Esophagus muscularis mucosa (tissue), 4 donors: ENCODE measurements at regions of chr6 and their contacts with region 1.

Region 1: DNA sequence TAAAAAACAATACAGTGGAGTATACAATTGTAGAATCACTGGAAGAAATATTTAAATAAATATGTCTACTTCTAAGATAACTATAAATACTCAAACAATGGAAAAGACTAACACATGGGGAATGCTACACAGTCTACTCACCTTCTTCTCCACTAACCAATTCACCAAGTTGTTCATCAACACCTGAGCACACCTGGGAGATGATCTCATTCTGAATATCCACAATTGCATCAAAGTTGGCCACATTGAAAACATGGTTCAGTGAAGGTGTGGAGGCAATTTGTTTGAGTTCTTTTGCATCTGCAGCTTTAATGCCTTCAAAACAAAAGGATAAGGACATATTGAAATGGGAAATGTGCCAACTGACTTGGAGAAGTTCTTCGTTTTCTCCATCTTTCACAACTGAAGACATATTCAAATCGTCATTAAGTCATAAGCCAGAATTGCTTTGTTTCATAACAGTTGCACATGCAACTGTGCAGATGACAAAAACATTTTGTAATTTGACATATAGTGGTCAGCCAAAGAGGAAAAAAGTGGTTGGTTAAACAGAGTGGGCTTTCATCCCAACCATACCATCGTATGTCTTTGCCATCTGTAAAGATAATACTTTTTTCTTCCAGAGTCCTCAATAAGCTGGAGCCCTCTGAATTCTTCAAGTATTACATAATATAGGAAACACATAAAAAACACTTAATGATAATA is 17.5 kb downstream of the COL12A1 start:
- DNase-seq: no peak
- H3K4me3 ChIP-seq: no peak overlapping the region
- H3K27ac ChIP-seq: no peak overlapping the region
- H3K4me1 ChIP-seq: peaks cover 0 to 4% (median 0%) of the 10 kb centered on the region in 4 donors
- H3K27me3 ChIP-seq: no peaks in the 10 kb centered on the region
- CTCF ChIP-seq: no peak
- EP300 ChIP-seq: no peak
- POLR2A ChIP-seq: no peak

Region 2: DNA sequence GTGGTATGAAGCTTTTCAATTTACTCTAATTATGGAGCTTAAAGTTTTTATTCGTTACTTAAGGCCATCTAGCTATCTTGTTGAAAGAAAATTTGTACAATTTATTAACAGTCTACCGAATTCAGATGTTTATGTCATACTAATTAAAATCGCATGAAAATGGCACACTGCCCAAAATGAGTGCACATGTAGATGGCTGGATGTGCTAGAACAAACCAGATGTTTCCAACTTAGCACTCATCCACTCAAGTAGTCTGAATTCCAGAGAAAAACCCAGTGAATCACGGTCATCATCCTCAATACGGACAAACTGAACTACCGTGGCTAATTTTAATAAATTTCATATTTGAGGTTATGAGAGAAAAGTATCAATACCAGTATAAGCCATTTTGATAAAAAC is 52.9 kb before region 1 on chr6:
- intact Hi-C with region 1: loop called (anchors 5 kb)
- DNase-seq: no peak
- H3K4me3 ChIP-seq: no peak overlapping the region
- H3K27ac ChIP-seq: no peak overlapping the region
- H3K4me1 ChIP-seq: peaks cover 0 to 5% (median 3%) of the 10 kb centered on the region in 4 donors
- H3K27me3 ChIP-seq: no peaks in the 10 kb centered on the region
- CTCF ChIP-seq: no peak
- EP300 ChIP-seq: no peak
- POLR2A ChIP-seq: no peak

Region 3: DNA sequence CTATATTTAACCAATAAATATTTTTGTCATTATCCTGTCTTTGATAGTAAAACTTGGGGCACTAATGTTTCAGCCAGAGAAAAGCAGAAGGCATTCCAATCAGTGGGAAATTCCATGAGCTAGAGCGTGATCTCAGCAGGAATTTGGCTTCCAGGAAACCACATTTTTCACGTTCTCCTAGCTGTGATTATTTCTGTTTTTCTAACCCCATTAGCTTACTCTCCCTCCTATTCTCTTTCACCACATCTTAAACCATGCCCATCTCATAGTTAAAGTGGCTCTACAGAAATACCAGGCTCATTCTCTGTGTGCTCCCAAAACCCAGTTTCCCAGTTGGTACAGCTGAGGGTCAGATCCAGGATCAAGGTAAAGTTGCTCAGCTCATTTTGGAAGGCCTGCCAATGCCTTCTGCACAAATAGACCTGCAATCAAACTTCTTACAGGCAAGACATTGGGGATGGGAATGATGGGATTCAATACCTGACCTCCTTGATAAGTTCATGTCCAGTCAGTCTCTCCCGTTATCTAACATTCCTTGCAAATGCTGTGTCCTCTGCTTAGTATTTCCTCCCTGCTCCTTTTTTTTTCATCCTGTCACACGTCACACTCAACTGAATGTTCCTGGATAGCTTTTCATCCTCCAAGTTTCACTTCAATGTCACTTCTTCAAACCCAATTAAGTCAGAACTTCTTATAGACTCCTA is 129.3 kb after region 1 on chr6:
- intact Hi-C with region 1: no loop called
- DNase-seq: no peak
- H3K4me3 ChIP-seq: no peak overlapping the region
- H3K27ac ChIP-seq: peak overlapping the region; percentile 11 to 48 (median 32)
- H3K4me1 ChIP-seq: peaks cover 11 to 21% (median 19%) of the 10 kb centered on the region in 4 donors
- H3K27me3 ChIP-seq: no peaks in the 10 kb centered on the region
- CTCF ChIP-seq: no peak
- EP300 ChIP-seq: no peak
- POLR2A ChIP-seq: no peak

Region 4: DNA sequence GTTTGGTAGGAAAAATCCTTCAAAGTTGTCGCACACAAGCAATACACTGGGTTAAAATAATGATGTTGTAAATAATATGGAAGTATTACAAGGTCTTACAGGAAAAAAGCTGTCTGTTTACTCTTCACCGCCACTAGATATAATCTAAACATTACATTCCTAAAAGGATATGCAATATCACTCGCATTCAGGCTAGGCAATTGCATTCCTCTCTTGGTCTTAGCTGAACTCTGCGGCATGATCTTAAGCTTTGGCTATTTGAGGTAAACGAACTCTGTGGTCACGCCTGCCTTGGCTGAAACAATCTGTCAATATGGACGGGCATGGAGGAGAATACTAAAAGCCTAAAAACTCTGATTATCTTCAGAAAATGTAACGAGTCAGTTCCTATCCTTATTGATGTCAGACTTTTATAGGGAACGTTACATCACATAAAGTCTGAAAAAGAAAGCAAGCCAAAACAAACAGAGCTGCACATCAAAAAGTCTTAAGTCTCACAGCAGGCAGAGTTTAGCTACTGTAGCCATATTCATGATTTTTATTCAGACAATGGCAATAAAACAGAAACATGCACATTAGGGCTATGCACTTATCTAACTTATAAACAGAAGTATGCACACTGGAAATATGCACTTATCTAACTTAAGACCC is 336.1 kb after region 1 on chr6:
- intact Hi-C with region 1: no loop called
- DNase-seq: no peak
- H3K4me3 ChIP-seq: peak overlapping the region; percentile 3 to 41 (median 36)
- H3K27ac ChIP-seq: peak overlapping the region in 2 of 4 donors; percentile 3 to 28
- H3K4me1 ChIP-seq: peaks cover 4 to 22% (median 12%) of the 10 kb centered on the region in 4 donors
- H3K27me3 ChIP-seq: no peaks in the 10 kb centered on the region
- CTCF ChIP-seq: no peak
- EP300 ChIP-seq: no peak
- POLR2A ChIP-seq: no peak